ENCODE measurements at regions of chr22 and their contacts with region 1.

Region 1: DNA sequence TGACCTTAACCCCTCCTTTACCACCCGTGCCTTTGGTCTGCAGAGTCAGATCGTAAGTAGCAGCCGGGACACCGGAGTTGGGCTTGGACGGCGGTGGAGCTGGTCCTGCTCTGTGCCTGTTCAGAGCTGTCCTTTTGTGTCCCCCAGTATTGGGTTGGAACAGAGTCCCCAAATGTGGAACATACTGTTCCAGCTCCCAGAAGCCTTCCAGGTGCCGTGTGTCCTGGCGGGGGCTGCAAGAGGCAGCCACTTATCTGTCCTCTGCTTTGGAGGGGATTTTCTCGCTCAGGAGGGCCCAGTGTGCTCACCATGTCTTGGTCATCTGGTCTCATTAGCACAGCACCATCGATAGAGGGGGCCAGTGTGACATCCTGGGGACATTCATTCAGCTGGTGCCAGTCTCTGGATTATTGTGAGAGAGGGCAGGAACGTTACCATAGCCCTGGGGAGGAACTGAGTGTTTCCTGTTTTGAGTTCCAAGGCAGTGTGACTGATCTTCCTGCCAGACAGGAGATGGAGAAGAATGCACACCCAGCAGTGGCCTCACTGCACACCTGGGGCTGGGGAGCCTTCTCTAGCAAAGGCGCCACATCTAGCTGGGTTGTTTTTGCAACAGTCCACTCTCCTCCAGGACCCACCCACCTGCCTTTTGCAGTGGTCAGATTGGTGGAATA is 12.4 kb downstream of the CRELD2 start:
- DNase-seq: peak; percentile 47 to 76
- H3K4me3 ChIP-seq: no peak overlapping the region
- H3K4me1 ChIP-seq: peaks cover 4% of the 10 kb centered on the region
- H3K27me3 ChIP-seq: no peaks in the 10 kb centered on the region

Region 2: DNA sequence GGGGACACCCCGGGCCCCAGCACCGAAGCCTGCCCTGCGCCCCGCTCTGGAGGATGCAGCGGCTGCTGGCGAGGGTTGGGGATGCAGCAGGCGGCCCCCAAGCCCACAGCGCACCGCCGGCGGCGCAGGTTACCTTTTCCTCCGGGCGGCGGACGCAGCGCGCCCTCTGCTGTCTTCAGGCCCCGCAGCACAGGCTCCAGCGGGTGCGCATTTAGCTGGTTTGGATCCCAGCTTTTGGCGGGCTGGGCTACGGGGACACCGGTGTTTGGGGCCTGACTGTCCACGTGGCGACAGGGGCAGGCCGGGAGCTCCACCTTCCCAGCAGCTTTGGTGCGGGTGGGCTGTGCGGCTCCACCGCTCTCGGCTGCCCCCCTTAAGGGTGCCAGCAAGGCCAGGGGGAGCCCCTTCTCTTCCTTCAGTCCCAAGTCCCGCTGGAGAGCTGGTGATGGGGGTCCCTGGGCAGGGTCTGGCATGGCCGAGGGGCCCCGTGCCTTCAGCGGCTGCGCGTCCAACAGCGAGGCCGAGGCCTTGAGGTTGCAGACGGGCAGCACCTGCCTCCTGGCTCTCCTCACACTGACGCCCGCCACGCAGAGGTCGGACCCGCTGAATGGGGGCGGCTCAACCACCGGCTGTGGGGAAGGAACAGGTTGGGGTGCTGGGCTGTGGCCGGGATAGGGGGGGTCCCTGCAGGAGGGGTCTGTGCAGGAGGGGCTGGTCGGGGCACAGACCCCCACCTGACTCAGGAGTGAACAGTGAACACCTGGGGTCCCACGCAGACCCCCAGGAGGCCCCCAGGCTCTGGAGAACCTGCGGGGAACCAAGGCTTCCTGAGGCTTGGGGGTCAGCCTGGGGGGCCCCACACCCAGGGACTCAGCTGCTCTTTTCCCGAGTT is 99.7 kb after region 1 on chr22:
- in situ Hi-C with region 1: loop called (anchors 5 kb)
- DNase-seq: peak; percentile 39 to 85
- H3K4me3 ChIP-seq: no peak overlapping the region
- H3K4me1 ChIP-seq: no peaks in the 10 kb centered on the region; the same call in 1 of the 2 replicates
- H3K27me3 ChIP-seq: peaks cover 9% of the 10 kb centered on the region

Region 3: DNA sequence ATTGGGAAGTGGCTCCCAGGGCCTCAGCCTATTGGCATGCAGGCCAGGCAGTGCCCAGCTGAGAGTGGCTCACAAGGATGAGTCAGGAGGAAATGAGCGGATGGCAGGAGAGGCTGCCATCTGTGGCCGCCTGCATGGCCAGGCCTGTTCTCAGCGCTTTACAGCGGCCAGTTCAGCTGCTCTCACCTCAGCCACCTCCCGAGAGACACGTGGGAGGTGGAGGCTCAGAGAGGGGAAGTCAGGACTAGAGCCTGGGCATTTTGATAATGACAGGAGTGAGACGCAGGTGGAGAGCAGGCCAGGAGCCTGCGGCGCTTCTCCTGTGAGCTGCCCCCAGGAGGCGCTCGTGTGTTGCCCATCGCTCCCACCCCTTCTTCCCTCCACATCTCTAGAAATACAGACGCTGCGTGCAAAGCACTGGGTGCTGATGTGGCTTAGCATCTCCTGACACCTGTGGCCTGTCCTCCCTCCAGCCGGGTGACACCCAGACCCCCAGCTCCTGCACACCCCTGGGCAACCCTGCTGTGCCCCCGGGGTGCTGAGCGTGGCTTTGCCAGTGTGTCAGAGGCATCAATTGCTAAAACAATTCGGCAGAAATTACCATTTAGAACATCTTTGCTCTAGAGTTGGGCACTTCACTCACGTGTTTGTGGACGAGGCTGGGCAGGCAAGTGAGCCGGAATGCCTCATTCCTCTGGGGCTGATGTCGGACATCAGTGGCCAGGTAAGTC is 218.3 kb after region 1 on chr22:
- in situ Hi-C with region 1: no loop called
- DNase-seq: peak; percentile 63 to 80
- H3K4me3 ChIP-seq: no peak overlapping the region
- H3K4me1 ChIP-seq: no peaks in the 10 kb centered on the region
- H3K27me3 ChIP-seq: no peaks in the 10 kb centered on the region

Region 4: DNA sequence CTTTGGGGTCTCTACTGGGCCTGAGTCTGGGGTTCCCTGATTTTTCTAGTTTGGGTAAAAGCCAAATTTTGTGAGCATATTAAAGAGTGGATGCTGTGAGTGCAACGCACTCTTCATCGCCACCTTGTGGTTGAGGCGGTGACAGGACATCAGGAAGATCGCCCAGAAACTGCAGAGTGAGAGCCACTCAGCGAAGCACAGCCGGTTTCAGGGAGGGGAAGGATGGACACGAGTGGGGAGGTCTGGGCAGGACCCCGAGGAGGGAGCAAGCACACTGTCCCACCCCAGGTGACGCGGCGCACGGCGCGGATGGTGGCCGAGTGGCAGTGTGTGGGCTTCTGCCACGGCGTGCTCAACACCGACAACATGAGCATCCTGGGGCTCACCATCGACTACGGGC is 279.0 kb after region 1 on chr22:
- in situ Hi-C with region 1: loop called (anchors 5 kb)
- DNase-seq: peak; percentile 44 to 79
- H3K4me3 ChIP-seq: no peak overlapping the region
- H3K4me1 ChIP-seq: no peaks in the 10 kb centered on the region
- H3K27me3 ChIP-seq: no peaks in the 10 kb centered on the region